Gastrocnemius medialis (tissue), 4 donors: ENCODE measurements at regions of chr7 and their contacts with region 1.

Region 1: DNA sequence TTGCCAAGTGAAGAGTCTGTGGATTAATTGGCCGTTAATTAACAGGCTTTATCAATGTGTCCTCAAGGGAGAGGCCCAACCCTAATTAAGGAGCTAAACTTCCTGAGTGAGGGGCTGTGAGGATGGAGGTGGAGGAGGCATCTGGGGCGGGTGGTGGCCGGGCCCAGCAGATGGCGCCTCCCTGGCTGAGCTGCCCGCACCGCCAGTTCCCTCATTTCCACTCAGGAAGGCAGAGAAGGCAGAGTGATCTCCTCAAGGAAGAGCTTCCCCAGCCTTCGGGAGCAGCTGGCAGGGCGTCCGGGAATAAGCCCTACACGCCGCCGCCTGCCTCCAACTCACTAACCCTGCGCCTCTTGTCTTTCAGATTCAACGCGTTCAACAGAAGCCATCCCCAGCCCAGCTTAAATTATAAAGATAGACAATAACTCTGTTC is 112.2 kb downstream of the CYTH3 start:
- DNase-seq: peak; percentile 41 to 70
- ATAC-seq: peak; percentile 71 to 81
- H3K4me3 ChIP-seq: no peak overlapping the region
- H3K27ac ChIP-seq: peak overlapping the region; percentile 32 to 60 (median 42)
- H3K4me1 ChIP-seq: peaks cover 4 to 15% of the 10 kb centered on the region in 2 donors
- H3K27me3 ChIP-seq: no peaks in the 10 kb centered on the region
- CTCF ChIP-seq: peak; percentile 62 to 83 (median 75)
- POLR2A ChIP-seq: no peak

Region 2: GRCh38 chr7:5045558-5046396 is 1114.4 kb before region 1 on chr7 and contains the start of gene RBAK:
- in situ Hi-C with region 1: no loop called
- intact Hi-C with region 1: no loop called
- DNase-seq: peak; percentile 70 to 87
- ATAC-seq: peak; percentile 97 to 99
- H3K4me3 ChIP-seq: peak within 1 kb of the TSS; percentile 67 to 95 (median 92)
- H3K27ac ChIP-seq: peak within 1 kb of the TSS; percentile 75 to 86 (median 78)
- H3K4me1 ChIP-seq: peaks cover 0 to 3% of the 10 kb centered on the region in 2 donors
- H3K27me3 ChIP-seq: no peaks in the 10 kb centered on the region
- CTCF ChIP-seq: no peak
- POLR2A ChIP-seq: peak; percentile 11 to 33
- total RNA-seq, gene RBAK: 3.4 to 6.0 (median 4.2) TPM

Region 3: DNA sequence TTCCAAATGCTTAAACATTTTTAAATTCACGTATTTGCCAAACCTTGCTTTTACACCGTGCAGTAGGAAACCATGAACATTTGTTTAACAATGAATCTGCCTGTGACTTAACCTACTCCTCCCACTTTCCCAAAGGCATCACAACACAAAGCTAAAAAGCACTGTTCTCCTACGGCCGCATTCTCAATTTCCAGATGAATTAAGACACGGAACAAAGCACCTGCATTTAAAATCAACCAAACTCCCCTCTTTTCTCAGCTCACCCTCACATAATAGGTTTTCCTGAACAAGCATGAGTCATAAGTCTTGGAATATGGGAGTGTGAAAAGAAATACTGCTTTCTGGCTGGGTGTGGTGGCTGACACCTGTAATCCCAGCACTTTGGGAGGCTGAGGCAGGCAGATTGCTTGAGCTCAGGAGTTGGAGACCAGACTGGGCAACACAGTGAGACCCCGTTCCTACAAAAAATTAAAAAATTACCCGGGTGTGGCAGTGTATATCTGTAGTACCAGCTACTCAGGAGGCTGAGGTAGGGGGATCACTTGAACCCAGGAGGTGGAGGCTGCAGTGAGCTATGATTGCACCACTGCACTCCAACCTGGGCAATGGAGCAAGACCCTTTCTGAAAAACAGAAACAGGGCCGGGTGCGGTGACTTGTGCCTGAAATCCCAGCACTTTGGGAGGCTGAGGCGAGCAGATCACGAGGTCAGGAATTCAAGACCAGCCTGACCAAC is 163.9 kb after region 1 on chr7:
- in situ Hi-C with region 1: loop called (anchors 5 to 10 kb)
- intact Hi-C with region 1: loop called (anchors 1 kb)
- DNase-seq: no peak
- ATAC-seq: no peak
- H3K4me3 ChIP-seq: no peak overlapping the region
- H3K27ac ChIP-seq: no peak overlapping the region
- H3K4me1 ChIP-seq: peaks cover 0 to 5% of the 10 kb centered on the region in 2 donors
- H3K27me3 ChIP-seq: no peaks in the 10 kb centered on the region
- CTCF ChIP-seq: no peak
- POLR2A ChIP-seq: no peak